Activated CD8-positive, alpha-beta T cell treated with anti-CD3 and anti-CD28 coated beads, Interleukin-2, amount 10 ng/mL, durations not matched to agents 7 days and 5 days (primary cell): ENCODE measurements at regions of chr4 and their contacts with region 1.

Region 1: DNA sequence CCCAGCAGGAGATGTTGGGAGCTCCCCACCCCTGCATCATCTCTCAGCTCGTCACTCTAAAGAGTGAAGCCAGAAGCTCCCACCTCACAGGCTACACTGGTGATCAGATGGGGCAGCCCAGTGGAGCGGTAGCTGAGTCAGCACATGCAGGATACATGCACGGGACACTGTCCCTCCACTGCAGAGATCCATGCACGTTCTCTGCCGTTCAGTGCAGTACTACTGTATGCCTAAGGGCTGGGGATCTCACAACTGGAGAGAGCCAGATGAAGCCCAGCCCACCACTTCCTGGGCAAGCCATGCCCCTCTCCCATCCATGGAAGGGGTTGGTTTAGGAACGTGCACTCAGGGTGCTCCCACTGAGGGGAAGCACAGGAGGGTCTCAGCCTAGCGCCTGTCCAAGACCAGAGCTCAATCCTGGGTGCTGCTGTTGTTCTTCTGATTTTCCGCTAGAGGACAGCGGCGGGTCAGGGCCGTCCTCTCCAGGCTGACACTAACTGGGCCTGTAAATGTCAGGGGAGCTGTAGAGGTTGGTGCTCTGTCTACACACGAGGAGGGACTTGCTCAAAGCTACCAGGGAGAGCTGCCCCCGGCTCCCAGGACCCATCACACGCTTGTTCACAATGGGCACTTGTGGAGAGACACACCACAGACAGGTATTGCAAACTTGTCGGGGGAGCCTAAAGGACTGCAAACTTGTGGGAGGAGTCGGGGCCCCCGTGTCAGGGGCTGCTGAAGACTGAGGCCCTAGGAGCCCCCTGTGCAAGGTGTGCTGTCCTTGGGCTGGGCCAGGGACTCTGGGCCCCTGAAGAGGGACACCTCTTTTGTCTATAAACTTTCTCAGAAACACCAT is 18.2 kb upstream of the ABLIM2 start:
- DNase-seq: peak; percentile 59
- ATAC-seq: peak; percentile 89
- H3K4me3 Mint-ChIP-seq: no peak overlapping the region
- H3K27ac Mint-ChIP-seq: no peak overlapping the region
- H3K4me1 Mint-ChIP-seq: no peaks in the 10 kb centered on the region
- H3K27me3 Mint-ChIP-seq: no peaks in the 10 kb centered on the region

Region 2: GRCh38 chr4:8101213-8102075 is 75.3 kb before region 1 on chr4:
- CTCF ChIA-PET with region 1: no interaction called
- POLR2A ChIA-PET with region 1: no interaction called
- DNase-seq: no peak
- ATAC-seq: no peak
- H3K4me3 Mint-ChIP-seq: no peak overlapping the region
- H3K27ac Mint-ChIP-seq: no peak overlapping the region
- H3K4me1 Mint-ChIP-seq: no peaks in the 10 kb centered on the region
- H3K27me3 Mint-ChIP-seq: no peaks in the 10 kb centered on the region

Region 3: DNA sequence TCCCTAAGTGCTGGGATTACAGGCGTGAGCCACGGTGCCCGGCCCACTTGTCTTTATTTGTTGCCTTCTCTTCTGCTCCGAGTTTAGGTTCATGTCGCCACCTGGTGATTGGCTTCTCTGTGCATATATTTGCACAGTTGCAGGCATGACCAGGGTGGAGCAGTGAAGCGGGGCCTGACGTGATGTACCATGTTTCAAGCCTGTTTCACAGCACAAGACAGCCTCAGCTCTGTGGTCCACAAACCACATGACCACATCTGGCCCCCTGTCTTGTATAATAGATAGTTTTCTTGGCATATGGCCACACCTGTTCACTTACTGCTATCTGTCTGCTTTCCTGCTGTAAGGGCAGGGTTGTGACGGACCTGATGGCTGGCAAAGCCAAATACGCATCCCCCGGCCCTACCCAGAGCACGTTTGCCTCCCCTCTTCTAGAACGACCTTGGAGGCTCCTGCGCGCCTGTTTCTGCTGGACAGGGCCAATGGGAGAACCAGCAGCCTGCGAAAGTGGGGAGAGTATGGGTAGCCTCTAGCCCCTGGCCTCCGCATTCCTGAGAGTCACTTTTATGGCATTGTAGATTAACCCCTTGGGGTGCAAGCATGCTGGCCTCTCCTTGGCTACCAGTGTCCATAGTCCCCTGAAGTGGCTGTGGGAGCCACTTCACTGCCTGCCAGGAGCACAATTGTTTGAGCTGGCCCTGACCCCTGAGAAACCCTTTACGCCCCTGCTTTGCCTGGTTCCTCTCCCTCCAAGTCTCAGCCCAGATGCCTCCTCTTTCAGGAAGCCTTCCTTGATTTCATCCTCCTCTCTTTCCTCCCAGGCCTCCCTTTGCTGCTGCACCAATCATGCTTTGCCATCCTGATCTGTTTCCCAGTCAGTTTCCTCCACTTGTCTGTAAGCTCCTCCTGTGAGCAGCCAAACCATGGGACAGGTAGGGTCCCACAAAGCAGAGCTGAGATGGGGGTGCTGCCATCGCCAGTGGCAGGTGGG is 16.3 kb after region 1 on chr4:
- CTCF ChIA-PET with region 1: interaction called, 18 read pairs
- POLR2A ChIA-PET with region 1: no interaction called
- DNase-seq: peak; percentile 58
- ATAC-seq: peak; percentile 72
- H3K4me3 Mint-ChIP-seq: no peak overlapping the region
- H3K27ac Mint-ChIP-seq: peak overlapping the region; percentile 49
- H3K4me1 Mint-ChIP-seq: peaks cover 11% of the 10 kb centered on the region
- H3K27me3 Mint-ChIP-seq: peaks cover 2% of the 10 kb centered on the region

Region 4: DNA sequence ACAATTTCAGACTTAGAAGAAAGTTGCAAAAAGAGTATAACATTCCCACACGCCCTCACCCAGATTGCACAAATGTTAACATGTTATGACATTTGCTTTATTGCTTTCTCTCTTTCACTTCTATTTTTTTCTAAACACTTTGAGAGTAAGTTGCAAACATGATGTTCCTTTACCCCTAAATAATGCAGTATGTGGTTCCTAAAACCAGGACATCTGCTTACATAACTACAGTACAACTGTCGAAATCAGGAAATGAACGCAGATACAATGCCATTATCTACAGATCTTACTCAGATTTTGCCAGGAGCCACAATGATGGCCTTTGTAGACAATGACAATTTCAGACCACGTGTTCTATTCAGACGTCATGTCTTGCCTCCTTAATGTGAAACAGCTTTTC is 44.7 kb after region 1 on chr4:
- CTCF ChIA-PET with region 1: interaction called, 12 read pairs
- POLR2A ChIA-PET with region 1: no interaction called
- DNase-seq: no peak
- ATAC-seq: no peak
- H3K4me3 Mint-ChIP-seq: no peak overlapping the region
- H3K27ac Mint-ChIP-seq: peak overlapping the region; percentile 43
- H3K4me1 Mint-ChIP-seq: peaks cover 47% of the 10 kb centered on the region
- H3K27me3 Mint-ChIP-seq: no peaks in the 10 kb centered on the region

Region 5: DNA sequence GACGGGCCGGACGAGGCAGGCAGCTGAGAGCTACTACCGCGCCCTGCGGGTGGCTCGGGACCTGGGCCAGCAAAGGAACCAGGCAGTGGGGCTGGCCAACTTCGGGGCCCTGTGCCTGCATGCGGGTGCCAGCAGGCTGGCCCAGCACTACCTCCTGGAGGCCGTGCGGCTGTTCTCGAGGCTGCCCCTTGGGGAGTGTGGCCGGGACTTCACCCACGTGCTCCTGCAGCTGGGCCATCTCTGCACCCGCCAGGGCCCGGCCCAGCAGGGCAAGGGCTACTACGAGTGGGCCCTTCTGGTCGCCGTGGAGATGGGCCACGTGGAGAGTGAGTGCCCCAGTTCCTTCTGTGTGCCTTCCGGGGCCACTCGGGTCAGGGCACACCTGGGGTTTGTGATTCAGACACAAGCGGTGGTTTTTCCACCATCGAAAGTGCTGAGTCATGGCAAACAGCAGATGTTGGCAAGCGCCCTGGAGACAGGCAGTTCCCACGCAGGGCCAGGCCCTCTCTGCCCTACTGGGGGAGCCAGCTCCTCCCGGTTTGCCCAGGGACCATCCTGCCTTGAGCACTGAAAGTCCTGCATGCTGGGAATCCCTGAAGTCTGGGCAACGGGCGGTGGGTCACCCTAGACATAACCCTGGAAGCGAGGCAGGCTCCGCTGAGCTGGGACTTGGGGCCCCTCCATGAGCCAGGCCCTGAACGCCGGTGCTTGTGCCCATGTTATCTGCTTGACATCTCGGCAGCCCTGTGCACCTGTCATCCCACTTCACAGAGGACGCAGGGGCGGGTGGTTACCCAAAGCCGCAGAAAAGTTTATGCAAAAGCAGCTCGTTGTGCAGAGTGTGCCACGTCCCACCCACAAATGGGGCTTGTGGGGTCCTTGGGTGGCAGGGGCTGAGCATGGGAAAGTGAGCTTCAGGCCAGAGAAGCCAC is 51.8 kb after region 1 on chr4:
- CTCF ChIA-PET with region 1: interaction called, 12 read pairs
- POLR2A ChIA-PET with region 1: no interaction called
- DNase-seq: peak; percentile 67
- ATAC-seq: peak; percentile 76
- H3K4me3 Mint-ChIP-seq: no peak overlapping the region
- H3K27ac Mint-ChIP-seq: no peak overlapping the region
- H3K4me1 Mint-ChIP-seq: peaks cover 37% of the 10 kb centered on the region
- H3K27me3 Mint-ChIP-seq: peaks cover 3% of the 10 kb centered on the region

Region 6: DNA sequence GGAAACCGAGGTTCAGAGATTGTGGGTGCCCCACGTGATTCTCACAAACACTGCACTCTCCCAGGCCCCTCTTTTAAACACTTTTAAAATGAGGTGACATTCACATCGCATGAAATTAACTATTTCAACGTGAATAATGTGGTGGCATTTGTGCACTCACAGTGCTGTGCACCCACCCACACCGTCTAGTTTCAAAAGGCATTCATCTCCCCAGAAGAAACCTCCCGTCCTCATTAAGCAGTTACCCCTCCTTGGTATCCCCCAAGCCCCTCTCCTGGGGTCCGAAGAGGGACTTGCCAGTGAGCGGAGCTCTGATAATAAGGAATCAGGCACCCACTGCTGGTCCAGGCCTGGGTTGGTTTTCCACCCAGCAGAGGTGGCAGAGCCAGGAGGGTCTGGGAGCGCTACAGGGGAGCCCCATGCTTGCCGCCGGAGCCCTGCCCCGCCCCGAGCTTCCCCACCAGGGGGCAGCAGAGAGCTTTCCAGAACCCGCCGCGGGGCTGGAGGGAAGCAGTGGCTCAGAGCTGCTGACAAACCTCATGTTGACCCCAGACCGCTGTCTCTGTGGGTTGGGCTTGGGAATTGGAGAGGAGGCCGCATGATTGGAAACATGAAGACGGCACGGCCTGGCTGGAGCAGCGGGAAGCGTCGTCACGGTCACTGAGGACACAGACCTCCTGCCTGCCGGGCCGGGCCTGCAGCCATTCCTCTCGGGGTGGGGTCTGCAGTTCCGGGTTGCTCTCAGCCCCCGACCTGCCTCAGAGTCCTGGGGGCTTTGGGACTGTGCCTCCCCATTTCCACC is 65.3 kb after region 1 on chr4:
- CTCF ChIA-PET with region 1: interaction called, 13 read pairs
- POLR2A ChIA-PET with region 1: no interaction called
- DNase-seq: peak; percentile 81
- ATAC-seq: peak; percentile 88
- H3K4me3 Mint-ChIP-seq: no peak overlapping the region
- H3K27ac Mint-ChIP-seq: no peak overlapping the region
- H3K4me1 Mint-ChIP-seq: peaks cover 5% of the 10 kb centered on the region
- H3K27me3 Mint-ChIP-seq: no peaks in the 10 kb centered on the region

Region 7: DNA sequence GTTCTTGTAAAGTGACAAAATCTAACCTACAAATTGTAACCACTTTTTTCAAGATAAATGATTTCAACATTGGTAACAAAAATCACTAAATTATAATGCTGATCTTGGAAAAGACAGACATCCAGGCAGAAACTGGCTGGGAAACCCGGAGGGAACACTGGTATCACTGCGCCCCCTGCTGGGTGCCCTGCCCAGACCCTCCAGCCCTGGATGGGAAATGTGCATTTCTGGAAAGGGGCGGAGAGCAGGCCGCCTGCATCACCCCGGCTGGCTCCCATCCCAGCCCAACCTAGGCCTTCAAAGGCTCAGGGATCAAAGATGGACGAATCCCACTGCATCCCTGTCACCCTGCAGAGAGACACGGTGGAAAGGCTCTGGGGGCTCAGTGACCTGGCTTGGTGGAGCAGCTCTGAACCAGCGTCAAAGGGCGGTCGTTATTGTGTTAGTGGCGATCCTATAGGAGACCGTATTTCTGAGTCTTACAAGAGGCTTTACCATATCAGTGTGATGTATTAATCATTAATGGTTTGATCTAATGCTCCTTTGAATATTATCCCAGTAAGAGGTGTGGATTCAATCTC is 226.5 kb after region 1 on chr4:
- CTCF ChIA-PET with region 1: interaction called, 11 read pairs
- POLR2A ChIA-PET with region 1: no interaction called
- DNase-seq: peak; percentile 53
- ATAC-seq: peak; percentile 70
- H3K4me3 Mint-ChIP-seq: no peak overlapping the region
- H3K27ac Mint-ChIP-seq: no peak overlapping the region
- H3K4me1 Mint-ChIP-seq: no peaks in the 10 kb centered on the region
- H3K27me3 Mint-ChIP-seq: no peaks in the 10 kb centered on the region